ENCODE measurements at regions of chr1 and their contacts with region 1.

Region 1: DNA sequence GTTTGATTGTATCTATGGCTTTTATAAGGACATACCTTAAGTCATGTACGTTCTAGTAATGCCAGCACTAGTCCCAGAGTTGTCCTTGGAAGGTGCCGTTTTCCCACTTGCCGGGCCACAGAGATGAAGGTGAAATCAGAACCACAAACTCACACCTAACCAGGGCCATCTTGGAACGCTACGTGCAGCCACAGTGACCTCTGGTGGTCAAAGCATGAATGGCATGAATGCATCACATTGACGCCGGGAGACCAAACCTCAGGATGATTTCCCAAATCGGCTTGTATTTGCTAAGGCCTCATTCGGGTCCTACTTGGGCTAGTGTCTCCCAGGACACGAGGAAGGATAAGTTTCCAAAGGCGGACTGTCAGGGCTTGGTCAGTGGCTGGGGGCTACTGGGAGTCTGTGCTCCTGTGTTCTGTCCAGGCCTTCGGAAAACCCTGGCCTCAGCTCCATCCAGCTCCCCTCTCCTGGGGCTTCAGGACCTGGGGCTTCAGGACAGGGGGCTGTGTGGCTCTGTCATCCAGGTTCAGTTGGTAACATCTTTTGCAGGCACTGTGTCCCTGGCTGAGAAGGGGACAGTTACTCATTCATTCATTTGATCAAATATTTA is 260.5 kb downstream of the PRDM2 start:
- DNase-seq: peak; percentile 73
- ATAC-seq: peak; percentile 74

Region 2: GRCh38 chr1:13662493-13662892 is 298.0 kb before region 1 on chr1:
- intact Hi-C with region 1: loop called (anchors 1 kb)
- DNase-seq: no peak
- ATAC-seq: peak; percentile 56

Region 3: GRCh38 chr1:14190508-14190907 is 230.0 kb after region 1 on chr1:
- intact Hi-C with region 1: no loop called
- DNase-seq: no peak
- ATAC-seq: no peak

Measured in Right ventricle myocardium inferior (tissue), 1 donor.